B cell (primary cell): ENCODE measurements at regions of chr3 and their contacts with region 1.

Region 1: GRCh38 chr3:169564883-169565282 is 98.6 kb downstream of the MECOM start:
- DNase-seq: no peak
- ATAC-seq: no peak
- H3K4me3 ChIP-seq: no peak overlapping the region
- H3K4me3 Mint-ChIP-seq: no peak overlapping the region
- H3K27ac ChIP-seq: no peak overlapping the region
- H3K27ac Mint-ChIP-seq: no peak overlapping the region
- H3K4me1 ChIP-seq: no peaks in the 10 kb centered on the region
- H3K4me1 Mint-ChIP-seq: peaks cover 1% of the 10 kb centered on the region
- H3K27me3 ChIP-seq: no peaks in the 10 kb centered on the region
- H3K27me3 Mint-ChIP-seq: no peaks in the 10 kb centered on the region
- CTCF ChIP-seq: no peak

Region 2: GRCh38 chr3:167669699-167670098 is 1895.2 kb before region 1 on chr3:
- CTCF ChIA-PET with region 1: no interaction called
- POLR2A ChIA-PET with region 1: no interaction called
- intact Hi-C with region 1: no loop called
- DNase-seq: no peak
- ATAC-seq: no peak
- H3K4me3 ChIP-seq: no peak overlapping the region
- H3K4me3 Mint-ChIP-seq: no peak overlapping the region
- H3K27ac ChIP-seq: no peak overlapping the region
- H3K27ac Mint-ChIP-seq: no peak overlapping the region
- H3K4me1 ChIP-seq: no peaks in the 10 kb centered on the region
- H3K4me1 Mint-ChIP-seq: no peaks in the 10 kb centered on the region
- H3K27me3 ChIP-seq: no peaks in the 10 kb centered on the region
- H3K27me3 Mint-ChIP-seq: no peaks in the 10 kb centered on the region
- CTCF ChIP-seq: no peak

Region 3: GRCh38 chr3:169539856-169540255 is 25.0 kb before region 1 on chr3:
- CTCF ChIA-PET with region 1: no interaction called
- POLR2A ChIA-PET with region 1: no interaction called
- intact Hi-C with region 1: no loop called
- DNase-seq: no peak
- ATAC-seq: no peak
- H3K4me3 ChIP-seq: no peak overlapping the region
- H3K4me3 Mint-ChIP-seq: no peak overlapping the region
- H3K27ac ChIP-seq: no peak overlapping the region
- H3K27ac Mint-ChIP-seq: no peak overlapping the region
- H3K4me1 ChIP-seq: no peaks in the 10 kb centered on the region
- H3K4me1 Mint-ChIP-seq: no peaks in the 10 kb centered on the region
- H3K27me3 ChIP-seq: no peaks in the 10 kb centered on the region
- H3K27me3 Mint-ChIP-seq: peaks cover 4% of the 10 kb centered on the region
- CTCF ChIP-seq: no peak

Region 4: GRCh38 chr3:169594402-169594801 is 29.5 kb after region 1 on chr3:
- CTCF ChIA-PET with region 1: no interaction called
- POLR2A ChIA-PET with region 1: no interaction called
- intact Hi-C with region 1: no loop called
- DNase-seq: no peak
- ATAC-seq: no peak
- H3K4me3 ChIP-seq: no peak overlapping the region
- H3K4me3 Mint-ChIP-seq: no peak overlapping the region
- H3K27ac ChIP-seq: no peak overlapping the region
- H3K27ac Mint-ChIP-seq: no peak overlapping the region
- H3K4me1 ChIP-seq: no peaks in the 10 kb centered on the region
- H3K4me1 Mint-ChIP-seq: no peaks in the 10 kb centered on the region
- H3K27me3 ChIP-seq: no peaks in the 10 kb centered on the region
- H3K27me3 Mint-ChIP-seq: no peaks in the 10 kb centered on the region
- CTCF ChIP-seq: no peak

Region 5: DNA sequence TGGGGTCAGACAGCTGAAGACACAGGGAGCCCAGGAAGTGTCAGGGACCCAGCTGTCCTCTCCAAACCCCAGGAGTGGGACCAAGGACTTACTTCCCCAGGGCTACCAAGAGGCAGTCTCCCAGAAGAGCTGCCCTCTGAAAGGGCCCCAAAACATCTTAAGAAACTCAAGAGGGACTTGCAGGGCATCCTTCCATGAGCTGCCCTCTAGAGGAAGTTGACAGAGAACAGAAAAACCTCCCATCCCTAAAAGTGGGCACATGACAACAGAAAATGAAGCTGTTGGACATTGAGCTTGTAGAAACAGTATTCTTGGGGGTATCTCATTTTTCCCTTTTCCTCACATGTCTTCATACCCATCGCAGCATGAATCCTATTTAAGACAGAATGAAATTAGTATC is 39.7 kb after region 1 on chr3:
- CTCF ChIA-PET with region 1: interaction called, 10 read pairs
- POLR2A ChIA-PET with region 1: no interaction called
- intact Hi-C with region 1: loop called (anchors 5 kb)
- DNase-seq: peak; percentile 3
- ATAC-seq: no peak
- H3K4me3 ChIP-seq: no peak overlapping the region
- H3K4me3 Mint-ChIP-seq: no peak overlapping the region
- H3K27ac ChIP-seq: no peak overlapping the region
- H3K27ac Mint-ChIP-seq: no peak overlapping the region
- H3K4me1 ChIP-seq: peaks cover 6 to 13% of the 10 kb centered on the region in 2 donors
- H3K4me1 Mint-ChIP-seq: peaks cover 27% of the 10 kb centered on the region
- H3K27me3 ChIP-seq: no peaks in the 10 kb centered on the region
- H3K27me3 Mint-ChIP-seq: peaks cover 3% of the 10 kb centered on the region
- CTCF ChIP-seq: no peak

Region 6: DNA sequence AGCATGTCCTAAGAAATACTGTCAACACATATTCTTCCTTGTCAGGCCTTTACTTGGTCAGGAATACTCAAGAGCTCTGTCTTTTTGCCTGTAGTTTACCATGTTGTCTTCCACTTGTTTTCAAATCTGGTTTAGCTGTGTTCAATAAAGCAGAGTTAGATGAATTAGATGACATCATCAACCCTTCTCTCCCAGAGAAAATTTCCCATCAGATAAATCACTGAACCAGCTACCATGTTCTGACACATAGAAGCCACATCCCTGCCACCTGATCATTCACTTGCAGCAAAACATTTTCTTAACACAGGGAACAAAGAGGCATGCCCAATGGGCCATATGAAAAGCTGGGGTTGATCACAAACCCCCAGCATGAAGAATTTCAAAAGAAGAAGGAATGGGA is 157.8 kb after region 1 on chr3:
- CTCF ChIA-PET with region 1: no interaction called
- POLR2A ChIA-PET with region 1: no interaction called
- intact Hi-C with region 1: no loop called
- DNase-seq: no peak
- ATAC-seq: no peak
- H3K4me3 ChIP-seq: no peak overlapping the region
- H3K4me3 Mint-ChIP-seq: no peak overlapping the region
- H3K27ac ChIP-seq: no peak overlapping the region
- H3K27ac Mint-ChIP-seq: no peak overlapping the region
- H3K4me1 ChIP-seq: no peaks in the 10 kb centered on the region
- H3K4me1 Mint-ChIP-seq: no peaks in the 10 kb centered on the region
- H3K27me3 ChIP-seq: peaks cover 0 to 2% (median 0%) of the 10 kb centered on the region in 4 experiments
- H3K27me3 Mint-ChIP-seq: peaks cover 46% of the 10 kb centered on the region
- CTCF ChIP-seq: no peak